ENCODE measurements at regions of chr12 and their contacts with region 1.

Region 1: GRCh38 chr12:6867413-6868210 is at the start of gene TPI1:
- DNase-seq: peak; percentile 98
- H3K4me3 ChIP-seq: peak within 1 kb of the TSS; percentile 91 to 99
- H3K27ac ChIP-seq: peak within 1 kb of the TSS; percentile 84 to 95
- H3K4me1 ChIP-seq: peaks cover 33 to 42% of the 10 kb centered on the region in 2 experiments
- H3K27me3 ChIP-seq: no peaks in the 10 kb centered on the region
- CTCF ChIP-seq: no peak
- EP300 ChIP-seq: no peak; a peak in 1 of 4 replicates
- RAD21 ChIP-seq: no peak
- polyA plus RNA-seq, gene TPI1: 1,175 and 1,316 TPM in 2 replicates

Region 2: DNA sequence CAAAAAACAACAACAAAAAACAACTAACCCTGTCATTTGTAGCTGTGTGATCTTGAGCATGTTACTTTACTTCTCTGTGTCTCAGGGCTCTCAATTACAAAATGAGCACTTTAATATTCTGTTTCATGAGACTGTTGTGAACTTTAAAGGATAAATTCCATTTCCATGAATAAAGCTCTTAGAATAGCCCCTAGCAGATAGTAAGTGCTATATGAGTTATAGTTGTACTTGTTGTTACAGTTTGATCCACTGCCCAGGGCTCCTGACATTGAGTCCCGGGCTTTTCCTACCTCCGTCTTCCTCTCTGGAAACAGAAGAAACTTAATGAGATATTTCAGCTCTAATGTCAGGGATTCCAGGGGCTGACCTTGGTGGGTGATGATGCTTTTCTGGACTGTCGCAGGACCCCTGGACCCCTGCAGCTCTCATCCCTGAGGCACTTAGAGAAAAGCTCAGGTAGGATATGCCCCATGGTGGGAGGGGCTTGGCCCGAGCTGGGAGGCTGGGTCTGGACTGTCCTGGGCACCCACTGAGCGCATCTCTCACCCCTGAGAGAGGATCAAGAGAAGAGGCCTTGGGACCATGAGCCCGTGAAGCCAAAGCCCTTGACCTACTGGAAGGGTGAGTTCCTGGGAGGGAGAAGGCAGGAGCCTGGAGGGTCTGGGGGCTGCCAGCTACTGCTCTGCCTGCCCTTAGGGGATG is 34.3 kb before region 1 on chr12:
- CTCF ChIA-PET with region 1: interaction called, 85 read pairs
- POLR2A ChIA-PET with region 1: interaction called, 4 read pairs
- DNase-seq: no peak
- H3K4me3 ChIP-seq: no peak overlapping the region
- H3K27ac ChIP-seq: no peak overlapping the region
- H3K4me1 ChIP-seq: peaks cover 0 to 11% of the 10 kb centered on the region in 2 experiments; a peak in 1 of 4 replicates
- H3K27me3 ChIP-seq: no peaks in the 10 kb centered on the region
- CTCF ChIP-seq: no peak
- EP300 ChIP-seq: no peak
- RAD21 ChIP-seq: no peak

Region 3: DNA sequence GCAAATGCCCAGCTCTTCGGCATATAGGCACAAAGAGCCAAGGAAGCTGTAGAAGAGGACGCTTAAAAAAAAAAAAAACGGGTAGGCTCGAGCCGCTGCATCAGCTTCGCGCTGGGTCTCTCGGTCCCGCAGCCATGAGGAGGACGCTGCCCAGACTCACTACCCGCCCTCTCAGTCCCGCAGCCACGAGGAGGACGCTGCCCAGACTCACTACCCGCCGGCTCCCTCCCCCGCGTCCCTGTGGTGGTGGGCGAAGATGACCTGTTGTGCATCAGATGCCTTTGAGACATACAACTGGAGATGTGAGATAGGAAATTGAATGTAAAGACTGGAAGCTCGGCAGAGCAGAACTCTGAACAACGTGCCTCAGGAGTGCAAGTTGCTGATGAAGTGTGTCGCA is 16.9 kb after region 1 on chr12:
- CTCF ChIA-PET with region 1: interaction called, 56 read pairs
- POLR2A ChIA-PET with region 1: interaction called, 8 read pairs
- DNase-seq: no peak
- H3K4me3 ChIP-seq: no peak overlapping the region
- H3K27ac ChIP-seq: no peak overlapping the region
- H3K4me1 ChIP-seq: no peaks in the 10 kb centered on the region
- H3K27me3 ChIP-seq: no peaks in the 10 kb centered on the region
- CTCF ChIP-seq: no peak
- EP300 ChIP-seq: no peak
- RAD21 ChIP-seq: no peak

Region 4: DNA sequence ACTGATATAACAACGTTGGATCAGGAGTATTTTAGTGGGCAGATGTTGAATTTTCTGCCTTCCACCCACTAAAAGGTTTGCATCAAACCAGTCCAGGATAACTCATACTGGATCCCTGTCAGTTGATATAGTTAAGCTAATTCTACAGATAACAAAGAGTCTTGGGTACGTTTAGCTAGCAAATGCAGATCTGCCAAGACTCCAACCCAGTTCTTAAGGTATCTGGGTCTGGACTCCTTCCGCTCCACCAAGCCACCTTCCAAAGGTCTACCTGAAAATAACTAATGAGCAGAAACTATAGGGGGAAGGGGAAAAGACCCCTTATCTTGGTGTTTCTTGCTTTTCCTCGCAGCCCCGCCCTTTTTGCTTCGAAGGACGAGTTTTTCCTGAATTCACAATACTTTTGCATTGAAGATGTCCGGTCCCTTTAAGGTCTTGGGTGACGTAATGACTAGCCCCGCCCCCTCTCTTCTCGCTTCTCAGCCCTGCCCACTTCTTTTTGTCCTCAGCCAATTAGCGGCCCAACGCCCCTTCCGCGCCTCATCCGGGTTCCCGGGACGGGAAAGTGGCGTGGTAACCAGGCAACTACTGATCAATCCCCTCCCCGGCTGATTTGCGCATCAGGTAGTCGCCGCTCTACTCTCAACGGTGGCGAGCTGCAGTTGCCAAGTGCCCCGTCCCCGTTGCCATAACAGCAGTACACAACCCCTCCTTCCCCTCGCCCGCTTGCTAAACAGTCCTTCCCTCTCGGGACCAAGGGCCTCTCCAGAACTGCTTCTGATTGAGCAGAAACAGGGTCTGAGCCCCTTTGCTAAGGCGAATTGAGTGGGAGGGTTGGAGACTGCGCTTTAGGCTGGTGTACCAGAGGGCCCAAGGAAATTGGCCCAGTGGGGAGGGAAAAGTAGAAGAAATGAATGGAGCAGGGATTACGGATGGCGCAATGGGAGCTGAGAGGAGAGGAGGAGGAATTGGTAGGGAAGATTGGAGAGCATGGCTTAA is 37.0 kb after region 1 on chr12 and contains the start of gene LRRC23:
- CTCF ChIA-PET with region 1: interaction called, 11 read pairs
- POLR2A ChIA-PET with region 1: interaction called, 5 read pairs
- DNase-seq: peak; percentile 88
- H3K4me3 ChIP-seq: peak within 1 kb of the TSS; percentile 72 to 98
- H3K27ac ChIP-seq: peak within 1 kb of the TSS; percentile 71 to 78
- H3K4me1 ChIP-seq: peaks cover 9 to 10% of the 10 kb centered on the region in 2 experiments; a peak in 2 of 4 replicates
- H3K27me3 ChIP-seq: no peaks in the 10 kb centered on the region
- CTCF ChIP-seq: no peak
- EP300 ChIP-seq: no peak
- RAD21 ChIP-seq: no peak
- polyA plus RNA-seq, gene LRRC23: 11.9 TPM in 2 replicates

Region 5: DNA sequence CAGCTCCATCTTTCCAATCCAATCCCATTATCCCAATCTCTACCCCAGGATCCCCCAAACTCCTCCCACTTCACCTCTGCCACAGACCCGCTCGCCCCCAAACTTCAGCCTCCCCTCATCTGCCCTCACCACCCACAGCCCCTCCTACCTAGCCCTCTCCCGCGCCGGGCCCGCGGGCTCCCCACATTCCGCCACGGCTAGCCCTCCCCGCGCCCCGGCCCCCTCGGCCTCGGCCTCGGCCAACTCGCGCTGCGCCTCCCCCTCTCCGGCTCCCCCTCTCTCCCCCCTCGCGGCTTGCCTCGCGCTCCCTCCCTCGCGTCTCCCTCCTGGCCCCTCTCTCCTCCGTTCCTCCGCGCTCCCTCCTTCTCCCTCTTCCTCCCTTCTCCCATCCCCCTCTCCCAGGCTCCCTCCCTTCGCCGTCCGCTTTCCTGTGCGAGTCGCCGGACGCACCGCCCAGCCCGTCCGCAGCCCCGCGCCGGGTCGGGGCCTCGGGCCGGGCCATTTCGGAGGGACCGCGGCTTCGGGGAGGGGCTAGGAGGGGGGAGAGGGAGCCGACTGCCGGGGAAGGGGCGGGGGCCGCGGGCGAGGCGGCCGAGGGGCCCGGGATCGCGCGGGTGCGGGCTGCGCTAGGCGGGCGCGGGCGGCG is 59.9 kb after region 1 on chr12 and contains the start of gene ATN1:
- CTCF ChIA-PET with region 1: interaction called, 27 read pairs
- POLR2A ChIA-PET with region 1: interaction called, 7 read pairs
- DNase-seq: peak; percentile 91
- H3K4me3 ChIP-seq: peak within 1 kb of the TSS; percentile 82 to 87
- H3K27ac ChIP-seq: peak within 1 kb of the TSS; percentile 76 to 90
- H3K4me1 ChIP-seq: peaks cover 37 to 38% of the 10 kb centered on the region in 2 experiments
- H3K27me3 ChIP-seq: no peaks in the 10 kb centered on the region
- CTCF ChIP-seq: no peak
- EP300 ChIP-seq: peak; percentile 16 to 38; a peak in 2 of 4 replicates
- RAD21 ChIP-seq: no peak
- polyA plus RNA-seq, gene ATN1: 18.5 and 29.3 TPM in 2 replicates

Measured in SK-N-SH (cell line).